ENCODE measurements at regions of chr12 and their contacts with region 1.

Region 1: DNA sequence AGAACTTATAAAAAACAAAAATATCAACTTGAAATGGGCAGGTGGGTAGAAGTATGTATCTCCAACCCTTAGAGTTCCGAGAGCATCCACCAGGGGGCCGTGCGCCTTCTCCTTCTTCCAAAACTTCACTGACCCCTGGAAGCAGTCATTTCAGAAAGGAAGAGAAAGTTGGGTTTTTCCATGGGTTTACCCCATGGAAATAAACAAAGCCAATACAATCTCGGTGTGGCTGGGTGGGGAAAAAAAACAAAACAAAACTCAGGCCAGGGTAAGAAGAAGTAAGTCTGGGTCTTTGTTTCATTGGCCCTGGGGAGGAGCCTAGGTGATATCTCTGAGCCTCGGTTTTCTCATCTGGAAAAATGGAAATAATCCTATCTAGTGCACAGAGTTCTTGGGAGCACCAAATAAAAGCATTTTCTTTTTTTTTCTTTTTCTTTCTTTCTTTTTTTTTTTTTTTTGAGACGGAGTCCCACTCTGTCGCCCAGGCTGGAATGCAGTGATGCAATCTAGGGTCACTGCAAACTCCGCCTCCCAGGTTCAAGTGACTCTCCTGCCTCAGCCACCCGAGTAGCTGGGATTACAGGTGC is 33.6 kb upstream of the HNF1A start:
- DNase-seq: peak; percentile 30 to 69 (median 44)
- H3K4me3 ChIP-seq: no peak overlapping the region
- H3K4me3 Mint-ChIP-seq: no peak overlapping the region
- H3K27ac ChIP-seq: no peak overlapping the region
- H3K27ac Mint-ChIP-seq: peak overlapping the region in 1 of 8 donors; percentile 55
- H3K4me1 ChIP-seq: no peaks in the 10 kb centered on the region
- H3K4me1 Mint-ChIP-seq: peaks cover 0 to 4% (median 2%) of the 10 kb centered on the region in 3 donors
- H3K27me3 ChIP-seq: no peaks in the 10 kb centered on the region
- H3K27me3 Mint-ChIP-seq: peaks cover 1 to 6% of the 10 kb centered on the region in 2 donors

Region 2: DNA sequence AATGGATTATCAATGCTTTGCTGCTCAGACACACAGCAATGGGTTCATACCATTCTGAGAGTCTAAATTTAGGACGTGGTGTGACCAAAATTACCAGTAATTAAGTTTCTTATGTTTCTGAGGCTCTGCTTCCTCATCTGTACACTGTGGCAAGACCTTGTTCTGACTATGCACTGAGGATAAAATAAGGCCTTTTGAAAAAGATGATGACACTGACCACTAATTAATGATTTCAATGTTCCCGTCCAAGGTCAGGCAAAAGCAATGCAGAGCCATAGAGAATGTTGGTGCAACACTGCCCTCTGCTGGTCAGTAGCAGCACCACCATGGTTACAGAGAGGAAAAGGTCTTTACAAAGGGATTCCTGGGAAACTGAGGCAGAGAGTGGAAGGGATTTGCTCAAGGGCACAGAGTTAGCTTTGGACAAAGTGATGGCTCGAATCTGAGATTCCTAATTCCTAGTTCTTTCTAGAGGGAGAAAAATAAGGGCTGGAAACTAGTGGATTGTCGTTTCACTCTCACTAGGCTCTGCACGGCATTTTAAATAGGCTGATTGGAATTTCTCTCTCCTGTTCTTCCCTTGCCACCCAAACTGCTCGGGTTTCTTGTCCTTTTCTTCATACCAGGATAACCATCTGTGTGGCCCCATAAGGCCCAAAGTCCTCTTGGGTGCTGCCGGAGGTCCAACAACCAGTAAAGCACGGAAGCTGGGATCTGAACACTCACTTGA is 165.6 kb after region 1 on chr12:
- CTCF ChIA-PET with region 1: interaction called, 3 read pairs
- POLR2A ChIA-PET with region 1: interaction called, 11 read pairs
- DNase-seq: peak; percentile 47 to 76 (median 52)
- H3K4me3 ChIP-seq: no peak overlapping the region
- H3K4me3 Mint-ChIP-seq: no peak overlapping the region
- H3K27ac ChIP-seq: no peak overlapping the region
- H3K27ac Mint-ChIP-seq: no peak overlapping the region
- H3K4me1 ChIP-seq: no peaks in the 10 kb centered on the region
- H3K4me1 Mint-ChIP-seq: peaks cover 3 to 9% (median 5%) of the 10 kb centered on the region in 3 donors
- H3K27me3 ChIP-seq: no peaks in the 10 kb centered on the region
- H3K27me3 Mint-ChIP-seq: no peaks in the 10 kb centered on the region

Region 3: DNA sequence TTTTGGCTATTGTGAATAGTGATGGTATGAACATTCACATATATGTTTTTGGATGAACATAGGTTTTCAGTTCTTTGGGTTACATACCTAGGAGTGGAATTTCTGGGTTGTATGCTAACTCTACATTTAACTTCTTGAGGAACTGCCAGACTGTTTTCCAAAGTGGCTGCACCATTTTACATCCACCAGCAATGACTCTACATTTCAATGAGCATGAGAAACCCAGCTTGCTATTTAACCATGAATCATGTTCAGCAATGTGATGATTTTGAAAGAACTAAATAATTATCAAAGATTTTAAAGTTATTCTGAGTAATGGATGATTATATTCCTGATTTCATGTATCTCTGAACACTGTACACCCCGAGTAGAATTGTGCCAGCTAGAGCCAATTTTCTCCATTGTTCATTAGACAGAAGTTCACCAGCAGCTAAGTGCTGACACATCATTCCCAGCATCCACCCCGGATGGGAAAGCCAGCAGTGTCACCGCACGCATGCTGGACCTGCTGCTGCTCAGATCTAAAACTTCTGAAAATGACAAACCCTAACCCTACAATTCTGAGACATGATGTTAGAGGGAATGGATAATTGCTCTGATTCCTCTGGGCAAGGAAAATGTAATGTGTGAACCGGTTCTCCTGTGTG is 420.8 kb after region 1 on chr12:
- CTCF ChIA-PET with region 1: no interaction called
- POLR2A ChIA-PET with region 1: no interaction called
- DNase-seq: no peak
- H3K4me3 ChIP-seq: no peak overlapping the region
- H3K4me3 Mint-ChIP-seq: no peak overlapping the region
- H3K27ac ChIP-seq: no peak overlapping the region
- H3K27ac Mint-ChIP-seq: no peak overlapping the region
- H3K4me1 ChIP-seq: no peaks in the 10 kb centered on the region
- H3K4me1 Mint-ChIP-seq: no peaks in the 10 kb centered on the region
- H3K27me3 ChIP-seq: peaks cover 7% of the 10 kb centered on the region
- H3K27me3 Mint-ChIP-seq: peaks cover 8 to 25% of the 10 kb centered on the region in 2 donors

Region 4: GRCh38 chr12:121536899-121537813 is 592.4 kb after region 1 on chr12:
- CTCF ChIA-PET with region 1: no interaction called
- POLR2A ChIA-PET with region 1: no interaction called
- DNase-seq: peak; percentile 47 to 73 (median 59)
- H3K4me3 ChIP-seq: peak overlapping the region; percentile 55
- H3K4me3 Mint-ChIP-seq: peak overlapping the region; percentile 75 to 92 (median 79)
- H3K27ac ChIP-seq: peak overlapping the region; percentile 62
- H3K27ac Mint-ChIP-seq: peak overlapping the region; percentile 84 to 99 (median 97)
- H3K4me1 ChIP-seq: peaks cover 42% of the 10 kb centered on the region
- H3K4me1 Mint-ChIP-seq: peaks cover 47 to 60% (median 50%) of the 10 kb centered on the region in 3 donors
- H3K27me3 ChIP-seq: no peaks in the 10 kb centered on the region
- H3K27me3 Mint-ChIP-seq: no peaks in the 10 kb centered on the region